Activated T-helper 1 cell treated with anti-CD3 and anti-CD28 coated beads, Interleukin-12 subunit alpha, Interleukin-12 subunit beta, Interleukin-2, Interleukin-4 antibody, amounts not matched to agents 30 ng/mL and 10 ng/mL and 1 ng/mL, durations not matched to agents 14 hours and 24 hours and 36 hours (primary cell): ENCODE measurements at regions of chr1 and their contacts with region 1.

Region 1: DNA sequence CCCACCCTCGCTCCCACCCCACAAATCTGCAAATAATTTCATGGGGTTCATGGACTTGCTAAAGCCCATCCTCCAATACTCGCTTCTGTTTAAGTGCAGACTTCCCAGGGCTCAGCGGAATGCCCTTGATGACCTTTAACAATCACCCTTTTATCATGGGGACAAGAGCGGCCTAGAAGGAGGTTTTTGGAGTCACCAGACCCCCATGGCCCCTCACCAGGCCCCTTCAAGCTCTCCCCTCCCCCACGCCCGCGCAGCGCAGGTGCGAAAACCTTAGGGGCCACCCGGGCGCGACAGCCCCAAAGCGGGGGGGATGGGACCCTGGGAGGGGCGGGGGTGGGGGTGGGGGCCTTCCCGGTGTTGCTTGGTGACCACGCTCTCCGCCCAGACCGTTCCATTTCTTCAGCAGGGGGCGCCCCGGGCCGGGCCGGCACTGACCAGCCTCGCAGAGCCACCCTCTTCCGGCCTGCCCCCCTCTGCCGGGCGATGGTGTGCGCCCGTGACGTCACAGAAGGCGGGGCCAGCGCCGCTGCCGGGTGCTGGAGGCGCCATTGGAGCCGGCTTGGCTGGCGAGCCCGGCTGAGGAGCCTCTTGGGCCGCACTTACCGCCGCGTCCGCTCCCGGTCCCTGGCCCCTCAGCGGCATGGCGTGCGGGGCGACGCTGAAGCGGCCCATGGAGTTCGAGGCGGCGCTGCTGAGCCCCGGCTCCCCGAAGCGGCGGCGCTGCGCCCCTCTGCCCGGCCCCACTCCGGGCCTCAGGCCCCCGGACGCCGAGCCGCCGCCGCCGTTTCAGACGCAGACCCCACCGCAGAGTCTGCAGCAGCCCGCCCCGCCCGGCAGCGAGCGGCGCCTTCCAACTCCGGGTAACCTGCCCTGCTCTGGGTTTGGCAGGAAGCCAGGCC is at the start of gene AKIRIN1:
- DNase-seq: peak; percentile 97
- H3K4me3 Mint-ChIP-seq: peak within 1 kb of the TSS; percentile 90
- H3K27ac Mint-ChIP-seq: peak within 1 kb of the TSS; percentile 83
- H3K4me1 Mint-ChIP-seq: peaks cover 34% of the 10 kb centered on the region
- H3K27me3 Mint-ChIP-seq: no peaks in the 10 kb centered on the region
- total RNA-seq, gene AKIRIN1: 78.1 and 78.5 TPM in 2 replicates

Region 2: DNA sequence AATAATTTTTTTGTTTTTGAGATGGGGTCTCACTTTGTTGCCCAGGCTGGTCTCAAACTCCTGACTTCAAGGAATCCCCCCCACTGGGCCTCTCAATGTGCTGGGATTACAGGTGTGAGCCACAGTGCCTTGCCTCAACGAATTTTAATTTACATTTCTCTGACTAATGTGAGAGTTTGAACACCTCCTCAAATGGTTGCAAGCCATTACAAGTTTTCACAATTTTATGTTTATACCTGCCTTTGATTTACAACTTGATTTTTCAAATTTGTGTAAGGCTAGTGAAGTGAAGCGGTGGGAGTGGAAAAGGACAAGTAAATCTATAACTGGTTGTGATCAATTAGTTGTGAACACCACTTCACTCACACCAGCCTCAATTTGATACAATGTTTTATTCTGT is 40.4 kb before region 1 on chr1:
- intact Hi-C with region 1: no loop called
- DNase-seq: no peak
- H3K4me3 Mint-ChIP-seq: no peak overlapping the region
- H3K27ac Mint-ChIP-seq: no peak overlapping the region
- H3K4me1 Mint-ChIP-seq: peaks cover 10% of the 10 kb centered on the region
- H3K27me3 Mint-ChIP-seq: peaks cover 4% of the 10 kb centered on the region

Region 3: DNA sequence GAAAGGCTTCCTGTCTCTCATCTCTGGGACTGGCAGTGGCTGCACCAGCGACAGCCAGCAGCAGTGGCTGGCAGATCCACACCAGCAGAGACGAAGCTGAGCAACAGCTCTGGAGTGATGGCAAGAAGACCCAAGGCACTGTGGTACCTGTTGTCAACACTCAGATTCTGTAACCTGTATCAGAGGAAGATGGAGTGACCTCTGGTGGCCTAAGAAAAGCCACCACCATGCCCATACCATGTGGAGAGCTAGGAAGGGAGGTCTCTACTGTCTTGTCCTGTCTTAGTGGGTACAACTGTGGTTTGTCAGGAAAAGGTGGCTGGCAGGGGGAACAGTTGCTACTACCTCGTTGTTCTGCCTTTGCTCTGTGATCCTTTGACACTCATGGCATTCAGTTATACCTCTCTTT is 26.8 kb before region 1 on chr1:
- intact Hi-C with region 1: no loop called
- DNase-seq: no peak
- H3K4me3 Mint-ChIP-seq: no peak overlapping the region
- H3K27ac Mint-ChIP-seq: no peak overlapping the region
- H3K4me1 Mint-ChIP-seq: no peaks in the 10 kb centered on the region
- H3K27me3 Mint-ChIP-seq: peaks cover 2% of the 10 kb centered on the region

Region 4: DNA sequence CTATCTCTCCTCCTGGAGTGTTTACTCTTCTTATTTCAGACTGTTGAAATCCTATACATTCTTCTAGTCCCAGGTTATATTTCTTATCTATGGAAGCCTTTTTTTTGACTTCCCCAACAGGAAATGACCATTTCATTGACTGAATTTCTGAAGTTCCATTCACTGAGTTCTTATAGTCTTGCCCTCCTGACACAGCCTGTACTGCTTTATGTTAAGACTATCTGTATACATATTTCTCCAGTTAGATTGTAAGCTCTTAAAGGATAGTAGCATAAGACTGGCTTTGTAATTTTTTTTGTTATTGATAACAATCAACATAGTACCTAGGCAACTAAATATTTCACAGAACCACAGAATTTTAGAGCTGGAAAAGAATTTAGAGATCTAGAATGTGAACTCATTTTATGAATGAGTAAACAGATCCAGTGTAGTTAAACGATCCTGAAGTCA is 198.6 kb after region 1 on chr1:
- intact Hi-C with region 1: loop called (anchors 5 kb)
- DNase-seq: no peak
- H3K4me3 Mint-ChIP-seq: peak overlapping the region; percentile 37
- H3K27ac Mint-ChIP-seq: peak overlapping the region; percentile 95
- H3K4me1 Mint-ChIP-seq: peaks cover 87% of the 10 kb centered on the region
- H3K27me3 Mint-ChIP-seq: no peaks in the 10 kb centered on the region